Psoas muscle (tissue), 8 donors: ENCODE measurements at regions of chr18 and their contacts with region 1.

Region 1: GRCh38 chr18:58402247-58402646 is 226.6 kb downstream of the ALPK2 start:
- DNase-seq: no peak
- ATAC-seq: peak in 3 of 4 donors; percentile 41 to 50 (median 42)
- H3K4me3 ChIP-seq: no peak overlapping the region
- H3K27ac ChIP-seq: no peak overlapping the region
- H3K4me1 ChIP-seq: peaks cover 13% of the 10 kb centered on the region
- H3K27me3 ChIP-seq: no peaks in the 10 kb centered on the region
- CTCF ChIP-seq: no peak

Region 2: DNA sequence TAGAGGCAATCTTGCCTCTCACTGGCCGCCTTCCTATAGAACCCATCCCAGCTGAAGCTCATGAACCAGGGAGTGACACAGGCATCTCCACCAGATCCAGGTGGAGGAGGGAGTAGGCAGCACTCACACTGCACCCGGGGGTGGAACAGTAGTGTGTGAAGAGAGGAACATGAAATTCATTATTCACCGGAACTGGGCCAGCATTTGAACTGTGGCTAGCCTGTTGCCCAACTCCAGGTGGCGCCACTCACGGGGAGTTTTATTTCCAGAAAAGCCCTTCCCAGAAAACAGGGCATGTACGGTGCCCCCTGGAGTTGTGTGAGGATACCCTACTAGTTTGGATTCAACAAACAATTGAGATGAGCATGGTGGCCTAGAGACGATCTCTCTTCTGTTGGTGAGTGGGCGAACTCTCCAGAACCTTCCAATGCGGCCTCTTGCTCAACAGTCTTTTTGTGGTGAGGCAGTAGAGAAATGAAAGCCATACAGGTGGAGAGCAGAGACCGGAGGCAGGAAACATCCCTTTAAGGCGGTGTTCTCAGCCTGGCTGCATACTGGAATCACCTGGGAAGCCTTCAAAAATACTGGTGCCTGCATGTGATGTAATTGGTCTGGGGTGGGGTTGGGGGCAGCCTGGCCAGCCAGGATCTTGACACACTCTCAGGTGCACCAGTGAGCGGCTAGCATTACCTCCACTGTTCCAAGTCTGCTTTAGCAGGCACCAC is 431.7 kb before region 1 on chr18:
- intact Hi-C with region 1: no loop called
- DNase-seq: no peak
- ATAC-seq: no peak
- H3K4me3 ChIP-seq: no peak overlapping the region
- H3K27ac ChIP-seq: no peak overlapping the region
- H3K4me1 ChIP-seq: no peaks in the 10 kb centered on the region
- H3K27me3 ChIP-seq: no peaks in the 10 kb centered on the region
- CTCF ChIP-seq: no peak

Region 3: GRCh38 chr18:58135701-58136331 is 266.4 kb before region 1 on chr18:
- intact Hi-C with region 1: no loop called
- DNase-seq: no peak
- ATAC-seq: peak; percentile 22 to 80 (median 60)
- H3K4me3 ChIP-seq: no peak overlapping the region
- H3K27ac ChIP-seq: no peak overlapping the region
- H3K4me1 ChIP-seq: no peaks in the 10 kb centered on the region
- H3K27me3 ChIP-seq: no peaks in the 10 kb centered on the region
- CTCF ChIP-seq: peak; percentile 71

Region 4: GRCh38 chr18:58359218-58359617 is 43.0 kb before region 1 on chr18:
- intact Hi-C with region 1: no loop called
- DNase-seq: no peak
- ATAC-seq: no peak
- H3K4me3 ChIP-seq: no peak overlapping the region
- H3K27ac ChIP-seq: no peak overlapping the region
- H3K4me1 ChIP-seq: peaks cover 5% of the 10 kb centered on the region
- H3K27me3 ChIP-seq: no peaks in the 10 kb centered on the region
- CTCF ChIP-seq: no peak

Region 5: DNA sequence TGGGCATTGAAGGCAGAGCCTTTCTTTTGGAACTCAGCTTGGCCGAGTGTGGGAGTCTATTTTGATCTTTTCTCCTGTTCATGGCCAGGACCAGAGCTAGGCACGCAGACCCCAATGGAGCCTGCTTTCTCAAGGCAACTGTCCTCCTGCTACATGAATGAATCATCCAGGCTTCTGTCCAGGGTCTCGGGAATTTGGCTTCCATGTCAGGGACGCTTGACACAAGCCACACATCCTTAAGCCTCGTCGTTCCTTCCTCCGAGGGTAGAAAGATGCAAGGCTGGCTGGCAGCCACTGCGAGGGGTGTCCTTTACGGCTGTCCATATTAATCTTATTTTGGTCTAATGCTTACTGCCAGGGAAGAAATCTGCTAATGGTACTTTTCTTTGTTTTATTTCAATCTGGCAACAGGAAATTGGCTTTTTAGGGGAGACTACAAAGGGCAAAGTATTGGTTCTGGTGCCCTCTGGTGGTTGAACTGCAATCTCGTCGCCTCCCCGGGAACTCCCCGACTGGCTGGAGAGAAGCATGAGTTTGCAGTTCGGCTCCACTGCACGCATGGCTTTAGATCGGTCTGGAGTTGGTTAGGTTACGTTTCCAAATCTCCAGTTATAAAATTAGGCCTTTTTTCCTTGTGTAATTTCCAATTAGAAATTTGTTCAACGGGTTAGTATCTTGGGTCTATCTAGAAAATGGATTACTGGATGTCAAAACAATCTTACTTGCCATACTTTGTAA is 91.4 kb after region 1 on chr18:
- intact Hi-C with region 1: loop called (anchors 1 to 2 kb)
- DNase-seq: peak; percentile 63 to 80
- ATAC-seq: peak; percentile 83 to 93 (median 88)
- H3K4me3 ChIP-seq: peak overlapping the region; percentile 46
- H3K27ac ChIP-seq: peak overlapping the region; percentile 82
- H3K4me1 ChIP-seq: peaks cover 29% of the 10 kb centered on the region
- H3K27me3 ChIP-seq: no peaks in the 10 kb centered on the region
- CTCF ChIP-seq: peak; percentile 85

Region 6: GRCh38 chr18:58761241-58761969 is 359.2 kb after region 1 on chr18:
- intact Hi-C with region 1: loop called (anchors 5 to 10 kb)
- DNase-seq: no peak
- ATAC-seq: peak; percentile 65 to 86 (median 75)
- H3K4me3 ChIP-seq: no peak overlapping the region
- H3K27ac ChIP-seq: peak overlapping the region; percentile 23
- H3K4me1 ChIP-seq: peaks cover 14% of the 10 kb centered on the region
- H3K27me3 ChIP-seq: peaks cover 0 to 4% (median 0%) of the 10 kb centered on the region in 3 donors
- CTCF ChIP-seq: no peak

Region 7: DNA sequence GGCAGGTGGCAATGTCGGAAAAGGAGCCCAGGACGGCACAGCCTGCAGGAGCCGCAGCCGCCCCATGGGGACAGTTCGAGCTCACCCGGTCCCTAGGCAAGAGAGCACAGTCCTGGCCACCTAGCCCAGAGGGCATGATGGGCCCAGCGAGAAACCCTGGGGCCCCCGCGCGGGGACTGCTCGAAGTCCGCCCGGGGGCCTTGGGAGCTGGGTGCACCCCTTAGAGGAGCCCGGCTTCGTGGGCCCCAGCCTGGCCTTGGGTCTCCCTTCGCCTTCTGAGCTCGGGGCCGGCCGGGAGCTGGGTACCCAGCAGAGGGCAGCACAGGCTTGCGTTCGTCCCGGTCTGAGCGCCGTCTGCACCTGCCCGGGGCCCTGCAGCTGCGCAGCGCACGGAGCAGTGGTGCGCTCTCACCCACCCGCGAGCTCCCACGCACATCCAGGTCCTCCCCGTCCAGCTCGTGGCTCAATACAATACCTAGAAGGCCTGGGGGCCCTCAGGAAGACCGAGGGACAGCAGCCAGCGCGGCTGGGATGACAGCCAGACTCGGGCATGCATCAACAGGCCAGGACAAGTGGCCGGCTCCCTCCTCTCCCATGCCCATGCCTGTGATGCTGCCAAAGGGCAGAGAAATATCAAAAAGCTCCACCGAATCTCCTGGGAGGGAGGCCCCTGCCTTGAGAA is 366.2 kb after region 1 on chr18:
- intact Hi-C with region 1: loop called (anchors 5 to 10 kb)
- DNase-seq: peak; percentile 74 to 89
- ATAC-seq: peak; percentile 92 to 97 (median 96)
- H3K4me3 ChIP-seq: peak overlapping the region; percentile 57
- H3K27ac ChIP-seq: peak overlapping the region; percentile 26
- H3K4me1 ChIP-seq: no peaks in the 10 kb centered on the region
- H3K27me3 ChIP-seq: peaks cover 0 to 4% (median 0%) of the 10 kb centered on the region in 3 donors
- CTCF ChIP-seq: peak; percentile 89